Right cardiac atrium (tissue), 5 donors: ENCODE measurements at regions of chr12 and their contacts with region 1.

Region 1: GRCh38 chr12:95790033-95790911 is at the start of gene NTN4:
- DNase-seq: peak; percentile 67 to 87 (median 85)
- ATAC-seq: peak; percentile 73 to 74
- H3K4me3 ChIP-seq: peak within 1 kb of the TSS; percentile 93
- H3K27ac ChIP-seq: peak within 1 kb of the TSS; percentile 51
- H3K4me1 ChIP-seq: peaks cover 15% of the 10 kb centered on the region
- H3K27me3 ChIP-seq: no peaks in the 10 kb centered on the region
- total RNA-seq, gene NTN4: 85.6 to 111 (median 103) TPM

Region 2: GRCh38 chr12:95608252-95609033 is 181.8 kb before region 1 on chr12:
- intact Hi-C with region 1: loop called in 1 of 4 experiments (anchors 10 kb)
- DNase-seq: peak; percentile 74 to 90 (median 80)
- ATAC-seq: peak; percentile 88 to 89
- H3K4me3 ChIP-seq: no peak overlapping the region
- H3K27ac ChIP-seq: peak overlapping the region; percentile 85
- H3K4me1 ChIP-seq: peaks cover 10% of the 10 kb centered on the region
- H3K27me3 ChIP-seq: no peaks in the 10 kb centered on the region